B cell (primary cell): ENCODE measurements at regions of chr13 and their contacts with region 1.

Region 1: DNA sequence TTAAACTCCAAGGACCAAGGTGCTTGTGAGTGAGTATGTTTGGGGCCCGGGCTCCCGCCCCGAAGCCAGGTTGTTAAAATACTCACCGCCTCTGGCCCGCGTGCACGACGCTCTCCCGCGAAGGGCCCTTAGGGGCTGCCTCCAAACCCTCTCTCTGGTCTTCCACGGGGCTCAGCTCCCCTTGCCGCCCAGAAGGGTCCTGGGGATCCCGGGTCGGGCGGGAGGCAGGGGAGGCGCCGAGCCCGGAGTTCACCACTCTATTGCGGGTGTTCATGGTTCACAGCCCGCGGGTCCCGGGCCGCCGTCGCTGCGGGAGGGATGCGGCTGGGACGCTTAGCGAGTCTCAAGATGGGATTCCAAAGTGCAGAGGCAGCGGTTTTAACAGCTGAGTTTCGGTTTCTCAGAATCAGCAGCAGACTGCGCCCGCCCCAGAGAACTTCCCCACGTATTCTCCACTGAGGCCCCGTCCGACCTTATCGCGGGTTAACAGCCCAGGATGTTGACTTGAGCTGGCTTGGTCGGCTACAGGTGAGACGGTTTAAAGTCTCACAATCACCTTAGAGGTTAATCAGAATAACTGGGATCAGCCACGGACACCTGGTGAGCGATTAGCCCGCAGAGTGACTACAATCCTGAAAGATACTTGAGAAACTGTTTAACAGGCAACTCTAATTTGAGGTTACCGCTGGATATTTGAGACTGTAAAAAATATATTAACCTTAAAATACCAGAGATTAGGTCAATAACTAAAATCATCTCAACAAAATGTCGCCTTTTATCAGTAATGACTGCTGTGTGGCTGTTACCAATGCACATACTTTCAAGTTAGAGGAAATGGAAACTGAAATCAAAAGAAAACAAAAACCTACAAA is at the start of gene EPSTI1:
- DNase-seq: peak; percentile 87
- ATAC-seq: peak; percentile 82
- H3K4me3 ChIP-seq: peak within 1 kb of the TSS; percentile 70 to 91 (median 80)
- H3K4me3 Mint-ChIP-seq: peak within 1 kb of the TSS; percentile 96
- H3K27ac ChIP-seq: peak within 1 kb of the TSS; percentile 93 to 95
- H3K27ac Mint-ChIP-seq: peak within 1 kb of the TSS; percentile 99
- H3K4me1 ChIP-seq: peaks cover 30 to 45% of the 10 kb centered on the region in 2 donors
- H3K4me1 Mint-ChIP-seq: peaks cover 46% of the 10 kb centered on the region
- H3K27me3 ChIP-seq: no peaks in the 10 kb centered on the region
- H3K27me3 Mint-ChIP-seq: no peaks in the 10 kb centered on the region
- CTCF ChIP-seq: no peak
- total RNA-seq, gene EPSTI1: 41.8 and 45.4 TPM in 2 replicates

Region 2: DNA sequence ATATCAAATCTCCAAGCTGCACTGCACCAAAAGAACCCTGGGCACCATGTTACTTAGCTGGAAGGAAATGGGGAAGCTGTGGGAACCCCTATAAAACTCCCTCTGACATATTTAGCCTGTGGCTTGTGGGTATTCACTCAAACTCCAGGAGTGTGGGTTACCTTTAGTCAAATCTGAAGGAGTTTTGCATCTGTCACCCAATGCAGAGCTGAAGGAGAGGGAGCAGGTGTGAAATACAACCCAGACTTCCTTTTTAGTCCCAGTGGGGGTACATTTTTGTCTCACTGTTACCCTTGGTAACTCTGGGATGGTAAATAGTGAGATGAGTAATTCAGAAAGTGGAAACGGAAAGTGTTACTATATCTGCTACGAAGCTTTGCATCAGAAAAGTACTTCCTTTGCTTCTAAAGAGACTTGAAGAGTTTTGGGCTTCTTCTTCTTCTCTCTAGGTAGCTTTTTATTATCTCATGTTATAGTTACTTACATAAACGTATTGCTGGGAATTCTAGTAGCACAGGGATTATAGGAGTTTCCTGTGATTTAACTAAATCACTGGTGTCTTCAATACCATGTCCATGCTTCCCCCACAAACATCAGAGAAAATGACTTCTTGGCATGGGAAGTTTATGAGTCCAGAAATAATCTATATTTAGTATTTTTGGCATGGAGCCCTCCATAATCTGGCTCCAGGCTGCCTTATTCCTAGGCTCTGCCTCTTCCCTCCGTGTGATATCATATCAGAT is 614.3 kb before region 1 on chr13:
- CTCF ChIA-PET with region 1: no interaction called
- POLR2A ChIA-PET with region 1: no interaction called
- intact Hi-C with region 1: loop called (anchors 5 kb)
- DNase-seq: peak; percentile 95
- ATAC-seq: peak; percentile 83
- H3K4me3 ChIP-seq: peak overlapping the region in 1 of 5 experiments; percentile 35
- H3K4me3 Mint-ChIP-seq: peak overlapping the region; percentile 78
- H3K27ac ChIP-seq: peak overlapping the region; percentile 76 to 79
- H3K27ac Mint-ChIP-seq: peak overlapping the region; percentile 88
- H3K4me1 ChIP-seq: peaks cover 43 to 48% of the 10 kb centered on the region in 2 donors
- H3K4me1 Mint-ChIP-seq: peaks cover 52% of the 10 kb centered on the region
- H3K27me3 ChIP-seq: no peaks in the 10 kb centered on the region
- H3K27me3 Mint-ChIP-seq: no peaks in the 10 kb centered on the region
- CTCF ChIP-seq: no peak

Region 3: GRCh38 chr13:42847891-42848663 is 144.1 kb before region 1 on chr13:
- CTCF ChIA-PET with region 1: no interaction called
- POLR2A ChIA-PET with region 1: no interaction called
- intact Hi-C with region 1: no loop called
- DNase-seq: no peak
- ATAC-seq: no peak
- H3K4me3 ChIP-seq: no peak overlapping the region
- H3K4me3 Mint-ChIP-seq: no peak overlapping the region
- H3K27ac ChIP-seq: no peak overlapping the region
- H3K27ac Mint-ChIP-seq: no peak overlapping the region
- H3K4me1 ChIP-seq: no peaks in the 10 kb centered on the region
- H3K4me1 Mint-ChIP-seq: no peaks in the 10 kb centered on the region
- H3K27me3 ChIP-seq: no peaks in the 10 kb centered on the region
- H3K27me3 Mint-ChIP-seq: peaks cover 5% of the 10 kb centered on the region
- CTCF ChIP-seq: no peak

Region 4: GRCh38 chr13:42959615-42960014 is 32.5 kb before region 1 on chr13:
- CTCF ChIA-PET with region 1: no interaction called
- POLR2A ChIA-PET with region 1: no interaction called
- intact Hi-C with region 1: no loop called
- DNase-seq: no peak
- ATAC-seq: no peak
- H3K4me3 ChIP-seq: no peak overlapping the region
- H3K4me3 Mint-ChIP-seq: no peak overlapping the region
- H3K27ac ChIP-seq: no peak overlapping the region
- H3K27ac Mint-ChIP-seq: no peak overlapping the region
- H3K4me1 ChIP-seq: no peaks in the 10 kb centered on the region
- H3K4me1 Mint-ChIP-seq: no peaks in the 10 kb centered on the region
- H3K27me3 ChIP-seq: no peaks in the 10 kb centered on the region
- H3K27me3 Mint-ChIP-seq: no peaks in the 10 kb centered on the region
- CTCF ChIP-seq: no peak

Region 5: DNA sequence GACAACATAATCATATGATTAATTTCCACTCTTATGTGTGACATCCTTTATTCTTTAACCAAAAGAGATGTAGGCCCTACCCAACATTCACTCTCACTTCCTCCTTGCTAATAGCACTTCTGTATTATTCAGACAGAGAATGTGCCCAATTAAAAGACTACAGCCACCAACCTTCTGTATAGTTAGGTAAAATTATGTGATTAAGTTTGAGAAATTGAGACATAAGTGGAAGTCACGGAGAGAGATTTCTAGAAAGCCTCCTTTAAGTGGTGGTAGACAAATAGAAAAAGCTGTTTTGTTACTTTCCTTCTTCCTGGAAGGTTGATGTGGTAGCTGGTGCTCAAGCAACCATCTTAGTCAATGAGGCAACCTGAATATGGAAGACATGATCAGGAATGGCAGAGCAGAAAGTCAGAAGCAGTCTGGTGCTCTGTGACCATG is 14.9 kb before region 1 on chr13:
- CTCF ChIA-PET with region 1: interaction called, 42 read pairs
- POLR2A ChIA-PET with region 1: interaction called, 11 read pairs
- intact Hi-C with region 1: loop called (anchors 1 kb)
- DNase-seq: peak; percentile 64
- ATAC-seq: peak; percentile 93
- H3K4me3 ChIP-seq: no peak overlapping the region
- H3K4me3 Mint-ChIP-seq: peak overlapping the region; percentile 1
- H3K27ac ChIP-seq: peak overlapping the region; percentile 47 to 57
- H3K27ac Mint-ChIP-seq: peak overlapping the region; percentile 38
- H3K4me1 ChIP-seq: peaks cover 11% of the 10 kb centered on the region in 2 donors
- H3K4me1 Mint-ChIP-seq: peaks cover 31% of the 10 kb centered on the region
- H3K27me3 ChIP-seq: no peaks in the 10 kb centered on the region
- H3K27me3 Mint-ChIP-seq: no peaks in the 10 kb centered on the region
- CTCF ChIP-seq: no peak

Region 6: GRCh38 chr13:43054803-43055802 is 63.0 kb after region 1 on chr13:
- CTCF ChIA-PET with region 1: interaction called, 6 read pairs
- POLR2A ChIA-PET with region 1: interaction called, 6 read pairs
- intact Hi-C with region 1: loop called (anchors 1 kb)
- DNase-seq: peak; percentile 68
- ATAC-seq: peak; percentile 56
- H3K4me3 ChIP-seq: peak overlapping the region; percentile 51 to 78 (median 69)
- H3K4me3 Mint-ChIP-seq: no peak overlapping the region
- H3K27ac ChIP-seq: peak overlapping the region; percentile 77 to 98
- H3K27ac Mint-ChIP-seq: no peak overlapping the region
- H3K4me1 ChIP-seq: peaks cover 42 to 50% of the 10 kb centered on the region in 2 donors
- H3K4me1 Mint-ChIP-seq: peaks cover 41% of the 10 kb centered on the region
- H3K27me3 ChIP-seq: no peaks in the 10 kb centered on the region
- H3K27me3 Mint-ChIP-seq: no peaks in the 10 kb centered on the region
- CTCF ChIP-seq: no peak

Region 7: GRCh38 chr13:43094901-43095300 is 102.8 kb after region 1 on chr13:
- CTCF ChIA-PET with region 1: interaction called, 4 read pairs
- POLR2A ChIA-PET with region 1: interaction called, 10 read pairs
- intact Hi-C with region 1: no loop called
- DNase-seq: no peak
- ATAC-seq: no peak
- H3K4me3 ChIP-seq: no peak overlapping the region
- H3K4me3 Mint-ChIP-seq: no peak overlapping the region
- H3K27ac ChIP-seq: no peak overlapping the region
- H3K27ac Mint-ChIP-seq: no peak overlapping the region
- H3K4me1 ChIP-seq: no peaks in the 10 kb centered on the region
- H3K4me1 Mint-ChIP-seq: peaks cover 11% of the 10 kb centered on the region
- H3K27me3 ChIP-seq: no peaks in the 10 kb centered on the region
- H3K27me3 Mint-ChIP-seq: no peaks in the 10 kb centered on the region
- CTCF ChIP-seq: no peak